ENCODE measurements at regions of chr19 and their contacts with region 1.

Region 1: DNA sequence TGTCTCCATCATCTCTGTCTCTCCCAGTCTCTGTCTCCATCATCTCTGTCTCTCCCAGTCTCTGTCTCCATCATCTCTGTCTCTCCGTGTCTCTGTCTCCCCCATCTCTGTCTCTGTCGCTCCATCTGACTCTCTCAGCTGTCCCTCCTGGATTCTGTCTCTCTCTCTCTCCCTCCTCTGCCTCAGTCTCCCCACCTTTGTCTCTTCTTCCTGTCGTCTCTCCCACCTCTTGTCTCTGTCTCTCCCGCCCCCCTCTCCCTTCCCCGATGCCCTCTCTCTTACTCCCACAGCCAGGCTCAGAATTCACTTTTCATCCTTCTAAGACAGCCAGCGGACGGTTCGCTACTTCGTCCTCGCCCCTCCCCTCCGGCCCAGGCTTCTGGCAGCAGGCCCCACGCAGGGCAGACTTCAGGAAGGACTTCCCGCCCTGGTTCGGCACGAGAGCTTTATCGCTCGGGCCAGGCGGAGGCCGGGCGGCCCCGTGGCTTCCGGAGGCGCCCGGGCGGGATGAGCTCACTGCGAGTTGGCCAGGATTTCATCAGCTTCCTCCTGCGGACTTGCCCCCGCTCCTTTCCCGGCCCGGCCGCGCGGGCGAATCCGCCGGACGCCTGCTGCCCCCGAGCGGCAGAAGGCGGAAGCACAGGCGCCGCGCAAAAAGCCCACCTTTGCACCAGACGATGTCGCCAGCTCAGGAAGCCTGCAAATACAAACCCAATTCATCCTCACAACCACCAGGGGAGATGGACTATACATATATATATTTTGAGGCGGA is 12.4 kb upstream of the CCDC9 start:
- DNase-seq: peak; percentile 92
- ATAC-seq: peak; percentile 92
- H3K4me3 ChIP-seq: peak overlapping the region in 2 of 3 experiments; percentile 45 to 46; a peak in 4 of 6 replicates
- H3K27ac ChIP-seq: peak overlapping the region; percentile 46
- H3K4me1 ChIP-seq: peaks cover 54% of the 10 kb centered on the region
- H3K27me3 ChIP-seq: no peaks in the 10 kb centered on the region
- CTCF ChIP-seq: peak; percentile 98
- EP300 ChIP-seq: peak; percentile 51 to 84; a peak in 3 of 4 replicates
- POLR2A ChIP-seq: no peak
- RAD21 ChIP-seq: peak; percentile 99

Region 2: DNA sequence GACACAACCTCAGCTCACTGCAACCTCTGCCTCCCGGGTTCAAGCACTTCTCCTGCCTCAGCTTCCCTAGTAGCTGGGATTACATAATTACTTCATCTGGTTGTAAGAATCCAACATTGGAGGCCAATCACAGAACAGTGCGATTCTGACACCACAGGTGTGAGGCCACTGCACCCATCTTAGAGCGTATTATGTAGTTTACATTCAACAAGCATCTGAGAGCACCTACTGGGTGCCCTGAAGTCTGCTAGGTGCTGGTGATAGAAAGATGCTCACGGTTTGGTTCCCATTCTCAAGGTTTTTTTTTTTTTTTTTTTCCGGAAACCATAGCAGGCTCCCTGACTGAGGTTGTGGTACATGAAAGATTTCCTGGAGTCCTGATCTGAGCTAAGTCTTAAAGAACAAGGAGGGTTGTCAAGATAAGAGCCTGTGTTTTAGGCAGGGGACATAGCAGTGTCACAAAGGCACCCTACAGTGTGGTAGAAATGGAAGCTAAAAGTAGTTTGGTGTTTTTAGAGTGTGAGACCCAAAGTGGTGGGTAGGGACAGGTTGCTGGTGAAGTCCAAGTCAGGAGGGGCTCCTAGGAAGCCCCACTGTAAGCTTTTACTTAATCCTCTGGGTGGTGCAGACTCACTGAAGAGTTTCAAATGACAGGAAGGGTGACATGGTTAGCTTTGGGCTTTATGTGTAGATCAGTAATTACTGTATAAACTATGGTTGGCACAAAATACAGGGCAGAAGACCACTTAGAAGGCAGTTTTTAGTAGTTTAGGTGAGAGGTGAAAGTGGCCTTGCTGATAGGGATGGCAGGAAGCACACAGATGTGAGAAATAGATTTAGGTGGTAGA is 98.1 kb before region 1 on chr19:
- CTCF ChIA-PET with region 1: interaction called, 5 read pairs
- POLR2A ChIA-PET with region 1: interaction called, 6 read pairs
- in situ Hi-C with region 1: loop called (anchors 5 kb)
- intact Hi-C with region 1: loop called (anchors 5 kb)
- DNase-seq: no peak
- ATAC-seq: no peak
- H3K4me3 ChIP-seq: no peak overlapping the region
- H3K27ac ChIP-seq: no peak overlapping the region
- H3K4me1 ChIP-seq: no peaks in the 10 kb centered on the region
- H3K27me3 ChIP-seq: no peaks in the 10 kb centered on the region
- CTCF ChIP-seq: no peak
- EP300 ChIP-seq: no peak
- POLR2A ChIP-seq: no peak
- RAD21 ChIP-seq: no peak

Region 3: GRCh38 chr19:47210689-47211316 is 33.2 kb before region 1 on chr19:
- CTCF ChIA-PET with region 1: interaction called, 33 read pairs
- POLR2A ChIA-PET with region 1: interaction called, 69 read pairs
- in situ Hi-C with region 1: no loop called
- intact Hi-C with region 1: loop called (anchors 1 kb)
- DNase-seq: peak; percentile 71
- ATAC-seq: peak; percentile 52
- H3K4me3 ChIP-seq: no peak overlapping the region
- H3K27ac ChIP-seq: peak overlapping the region; percentile 55
- H3K4me1 ChIP-seq: peaks cover 11% of the 10 kb centered on the region
- H3K27me3 ChIP-seq: no peaks in the 10 kb centered on the region
- CTCF ChIP-seq: peak; percentile 80
- EP300 ChIP-seq: no peak
- POLR2A ChIP-seq: 0 out of 4 replicates have a peak, but pooled peaks of 1 of the 2 experiments have one; percentile 16
- RAD21 ChIP-seq: peak; percentile 68

Region 4: DNA sequence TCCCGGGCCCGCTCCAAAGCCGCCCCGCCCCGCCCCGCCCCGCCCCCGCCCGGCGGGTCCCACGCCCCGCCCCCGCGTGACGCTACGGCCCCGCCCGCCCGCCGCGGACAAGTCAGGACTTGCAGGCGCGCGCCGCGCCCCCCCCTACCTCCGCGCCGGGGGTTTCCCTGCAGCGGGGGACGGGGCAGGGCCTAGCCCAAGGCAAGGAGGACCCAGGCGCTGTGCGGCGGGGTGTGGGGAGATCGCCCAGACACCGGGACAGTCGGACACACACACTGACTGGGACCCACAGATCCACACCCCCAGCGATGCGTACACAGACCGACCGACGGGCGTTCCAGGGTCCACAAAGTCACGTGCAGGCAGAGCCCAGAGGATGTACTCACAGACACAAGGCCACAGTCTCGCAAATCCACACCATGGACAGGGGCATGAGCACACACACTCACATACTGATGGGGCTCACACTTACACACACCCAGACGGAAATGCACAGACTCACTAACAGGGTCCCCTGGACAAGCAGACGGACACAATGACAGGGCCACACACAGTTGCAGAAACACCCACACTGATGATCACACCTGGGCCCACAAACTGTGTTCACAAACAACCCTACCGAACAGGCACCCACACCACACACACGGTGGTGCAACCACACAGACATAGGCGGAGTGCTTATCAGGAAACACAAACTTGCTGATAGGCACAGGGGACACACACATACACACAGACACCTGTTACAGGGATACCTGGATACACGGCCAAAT is 12.6 kb before region 1 on chr19:
- CTCF ChIA-PET with region 1: interaction called, 13 read pairs
- POLR2A ChIA-PET with region 1: interaction called, 93 read pairs
- in situ Hi-C with region 1: no loop called
- intact Hi-C with region 1: no loop called
- DNase-seq: peak; percentile 88
- ATAC-seq: peak; percentile 35
- H3K4me3 ChIP-seq: peak overlapping the region; percentile 54 to 100 (median 55); a peak in 5 of 6 replicates
- H3K27ac ChIP-seq: peak overlapping the region; percentile 94
- H3K4me1 ChIP-seq: peaks cover 34% of the 10 kb centered on the region
- H3K27me3 ChIP-seq: peaks cover 0 to 4% of the 10 kb centered on the region in 2 experiments; a peak in 1 of 5 replicates
- CTCF ChIP-seq: peak; percentile 35; the same call in 1 of the 2 replicates
- EP300 ChIP-seq: peak in 1 of 2 experiments; percentile 43; a peak in 1 of 4 replicates
- POLR2A ChIP-seq: peak; percentile 86
- RAD21 ChIP-seq: no peak

Region 5: DNA sequence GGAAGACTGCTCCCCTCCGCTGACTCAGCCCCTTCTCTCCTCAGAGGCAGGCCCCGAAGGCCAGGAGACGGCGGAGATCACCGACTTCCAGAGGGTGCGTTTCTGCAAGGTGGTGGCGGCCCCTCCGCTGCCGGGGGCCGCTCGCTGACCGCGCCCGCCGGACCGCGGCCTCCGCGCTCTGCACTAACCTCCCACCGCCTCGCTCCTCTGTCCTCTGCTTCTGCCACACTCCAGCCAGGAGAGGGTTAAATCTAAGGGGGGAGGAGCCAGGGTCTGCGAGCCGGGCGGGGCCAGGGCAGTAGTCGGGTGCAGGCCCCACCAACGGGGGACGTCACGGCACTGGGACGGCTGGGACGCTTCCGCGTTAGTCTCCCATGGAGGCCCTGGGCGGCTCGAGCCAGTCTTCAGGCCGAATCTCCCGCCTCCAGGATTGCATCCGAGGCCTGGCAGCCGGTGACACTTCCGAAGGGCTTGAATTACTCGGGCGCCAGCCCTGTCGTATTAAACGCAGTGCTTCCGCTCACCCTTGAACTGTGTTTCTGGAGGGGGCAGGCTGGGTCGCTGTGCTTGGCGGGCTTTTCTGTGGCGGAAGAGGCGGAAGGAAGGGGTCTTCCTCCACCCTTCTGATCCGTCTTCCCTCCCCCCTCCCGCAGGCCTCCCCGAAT is 29.5 kb after region 1 on chr19:
- CTCF ChIA-PET with region 1: no interaction called
- POLR2A ChIA-PET with region 1: interaction called, 16 read pairs
- in situ Hi-C with region 1: no loop called
- intact Hi-C with region 1: no loop called
- DNase-seq: peak; percentile 84
- ATAC-seq: peak; percentile 89
- H3K4me3 ChIP-seq: peak overlapping the region; percentile 73 to 85 (median 75)
- H3K27ac ChIP-seq: peak overlapping the region; percentile 98
- H3K4me1 ChIP-seq: peaks cover 24% of the 10 kb centered on the region
- H3K27me3 ChIP-seq: no peaks in the 10 kb centered on the region
- CTCF ChIP-seq: no peak
- EP300 ChIP-seq: no peak
- POLR2A ChIP-seq: peak in 1 of 2 experiments; percentile 55; a peak in 3 of 4 replicates
- RAD21 ChIP-seq: peak; percentile 18; the same call in 1 of the 2 replicates